ENCODE measurements at regions of chr3 and their contacts with region 1.

Region 1: GRCh38 chr3:133384331-133385027 is 15.4 kb upstream of the BFSP2 start:
- DNase-seq: peak; percentile 79
- H3K4me3 ChIP-seq: no peak overlapping the region
- H3K27ac ChIP-seq: no peak overlapping the region
- H3K4me1 ChIP-seq: no peaks in the 10 kb centered on the region
- H3K27me3 ChIP-seq: no peaks in the 10 kb centered on the region
- CTCF ChIP-seq: peak; percentile 91

Region 2: GRCh38 chr3:132535575-132536441 is 848.7 kb before region 1 on chr3:
- CTCF ChIA-PET with region 1: no interaction called
- POLR2A ChIA-PET with region 1: no interaction called
- intact Hi-C with region 1: loop called (anchors 5 kb)
- DNase-seq: peak; percentile 79
- H3K4me3 ChIP-seq: no peak overlapping the region
- H3K27ac ChIP-seq: peak overlapping the region; percentile 3
- H3K4me1 ChIP-seq: no peaks in the 10 kb centered on the region
- H3K27me3 ChIP-seq: no peaks in the 10 kb centered on the region
- CTCF ChIP-seq: peak; percentile 75

Region 3: GRCh38 chr3:132730891-132731580 is 653.4 kb before region 1 on chr3:
- CTCF ChIA-PET with region 1: interaction called, 6 read pairs
- POLR2A ChIA-PET with region 1: no interaction called
- intact Hi-C with region 1: loop called (anchors 2 kb)
- DNase-seq: peak; percentile 61
- H3K4me3 ChIP-seq: no peak overlapping the region
- H3K27ac ChIP-seq: no peak overlapping the region
- H3K4me1 ChIP-seq: no peaks in the 10 kb centered on the region
- H3K27me3 ChIP-seq: peaks cover 42% of the 10 kb centered on the region
- CTCF ChIP-seq: peak; percentile 57

Measured in A673 (cell line).